ENCODE measurements at regions of chr16 and their contacts with region 1.

Region 1: GRCh38 chr16:18979936-18980335 is 3.8 kb upstream of the TMC7 start:
- DNase-seq: no peak

Region 2: GRCh38 chr16:18801197-18801972 is 178.6 kb before region 1 on chr16 and contains the start of gene ARL6IP1:
- in situ Hi-C with region 1: loop called (anchors 10 kb)
- DNase-seq: peak; percentile 100
- total RNA-seq, gene ARL6IP1: 237 and 308 TPM in 2 replicates

Measured in Caki2 (cell line).